Vagina (tissue), 2 donors: ENCODE measurements at regions of chr7 and their contacts with region 1.

Region 1: GRCh38 chr7:32043714-32044113 is 26.5 kb downstream of the PDE1C start:
- DNase-seq: no peak
- H3K4me3 ChIP-seq: no peak overlapping the region
- H3K27ac ChIP-seq: no peak overlapping the region
- H3K4me1 ChIP-seq: no peaks in the 10 kb centered on the region
- H3K27me3 ChIP-seq: no peaks in the 10 kb centered on the region
- CTCF ChIP-seq: no peak
- POLR2A ChIP-seq: no peak

Region 2: GRCh38 chr7:33639552-33640197 is 1596.0 kb after region 1 on chr7:
- intact Hi-C with region 1: loop called (anchors 10 kb)
- DNase-seq: no peak
- H3K4me3 ChIP-seq: no peak overlapping the region
- H3K27ac ChIP-seq: no peak overlapping the region
- H3K4me1 ChIP-seq: no peaks in the 10 kb centered on the region
- H3K27me3 ChIP-seq: no peaks in the 10 kb centered on the region
- CTCF ChIP-seq: no peak
- POLR2A ChIP-seq: no peak